Lower leg skin (tissue), 4 donors: ENCODE measurements at regions of chr1 and their contacts with region 1.

Region 1: GRCh38 chr1:152141974-152142584 is 16.9 kb downstream of the RPTN start:
- DNase-seq: peak; percentile 76 to 87
- H3K4me3 ChIP-seq: no peak overlapping the region
- CTCF ChIP-seq: peak in 1 of 3 donors; percentile 53
- POLR2A ChIP-seq: no peak

Region 2: GRCh38 chr1:150778409-150778808 is 1363.7 kb before region 1 on chr1:
- intact Hi-C with region 1: no loop called
- DNase-seq: no peak
- H3K4me3 ChIP-seq: no peak overlapping the region
- CTCF ChIP-seq: no peak
- POLR2A ChIP-seq: no peak

Region 3: DNA sequence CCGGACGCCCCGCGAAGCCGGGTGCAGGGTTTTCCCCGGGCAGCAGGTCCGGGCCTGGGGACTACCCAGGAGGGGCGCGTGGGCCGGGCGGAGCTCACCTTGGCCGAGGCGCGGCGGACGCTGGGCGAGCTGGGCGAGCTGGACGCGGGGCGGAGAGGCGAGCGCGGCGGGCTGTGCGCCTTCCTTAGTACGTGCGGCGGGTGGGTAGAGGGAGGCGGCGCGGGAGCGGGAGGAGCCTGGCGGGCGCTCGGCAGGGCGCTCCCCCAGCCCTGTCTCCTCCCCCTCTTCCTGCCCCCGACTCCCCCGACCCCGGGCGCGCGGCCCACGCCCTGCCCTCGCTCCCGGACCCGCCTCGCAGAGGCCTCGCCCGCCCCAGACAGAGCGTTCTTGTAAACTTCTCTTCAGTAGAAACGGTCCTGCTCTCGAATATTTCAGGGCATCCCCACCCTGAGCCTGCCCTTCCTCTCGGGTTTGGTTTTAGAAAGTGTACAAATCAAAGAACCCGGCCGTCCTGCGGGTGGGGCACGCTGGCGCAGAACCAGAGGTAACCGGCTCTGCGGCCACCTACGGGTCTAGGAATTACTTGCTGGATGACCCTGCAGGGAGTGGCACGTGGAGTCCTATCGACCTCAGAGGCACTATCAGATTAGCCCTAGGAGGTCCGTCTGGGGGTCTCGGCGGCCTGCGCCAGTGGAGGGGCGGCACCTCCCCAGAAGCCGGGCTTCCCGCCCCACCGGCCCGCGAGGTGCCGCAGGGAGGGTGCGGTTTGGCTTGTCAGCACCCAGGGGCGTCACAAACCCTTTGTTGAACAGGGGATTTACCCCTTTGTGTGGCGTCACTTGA is 148.2 kb before region 1 on chr1 and contains the start of gene S100A10:
- intact Hi-C with region 1: no loop called
- DNase-seq: peak; percentile 79 to 97
- H3K4me3 ChIP-seq: peak within 1 kb of the TSS; percentile 75
- CTCF ChIP-seq: no peak
- POLR2A ChIP-seq: peak in 1 of 2 donors; percentile 35
- total RNA-seq, gene S100A10: 74.8 to 153 (median 102) TPM

Region 4: DNA sequence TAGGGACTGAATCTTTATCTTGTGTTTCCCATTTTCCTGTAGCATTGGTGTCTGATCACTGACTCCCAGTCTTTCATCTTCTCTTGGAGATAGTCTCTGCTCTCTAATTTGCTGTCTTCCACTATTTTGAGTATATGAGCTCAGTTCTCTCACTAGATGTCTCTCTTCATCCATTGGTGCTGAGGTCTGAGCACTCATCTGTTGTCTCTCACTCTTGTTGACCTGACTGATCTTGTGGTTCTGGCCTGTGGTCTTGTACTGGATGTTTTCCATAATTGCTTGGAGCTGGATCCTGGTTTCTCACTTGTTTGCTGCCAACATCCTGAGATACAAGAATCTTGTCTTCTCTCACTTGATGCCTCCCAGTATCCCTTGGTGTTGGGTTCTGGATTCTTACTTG is 80.1 kb before region 1 on chr1:
- intact Hi-C with region 1: loop called (anchors 10 kb)
- DNase-seq: no peak
- H3K4me3 ChIP-seq: no peak overlapping the region
- CTCF ChIP-seq: no peak
- POLR2A ChIP-seq: no peak

Region 5: DNA sequence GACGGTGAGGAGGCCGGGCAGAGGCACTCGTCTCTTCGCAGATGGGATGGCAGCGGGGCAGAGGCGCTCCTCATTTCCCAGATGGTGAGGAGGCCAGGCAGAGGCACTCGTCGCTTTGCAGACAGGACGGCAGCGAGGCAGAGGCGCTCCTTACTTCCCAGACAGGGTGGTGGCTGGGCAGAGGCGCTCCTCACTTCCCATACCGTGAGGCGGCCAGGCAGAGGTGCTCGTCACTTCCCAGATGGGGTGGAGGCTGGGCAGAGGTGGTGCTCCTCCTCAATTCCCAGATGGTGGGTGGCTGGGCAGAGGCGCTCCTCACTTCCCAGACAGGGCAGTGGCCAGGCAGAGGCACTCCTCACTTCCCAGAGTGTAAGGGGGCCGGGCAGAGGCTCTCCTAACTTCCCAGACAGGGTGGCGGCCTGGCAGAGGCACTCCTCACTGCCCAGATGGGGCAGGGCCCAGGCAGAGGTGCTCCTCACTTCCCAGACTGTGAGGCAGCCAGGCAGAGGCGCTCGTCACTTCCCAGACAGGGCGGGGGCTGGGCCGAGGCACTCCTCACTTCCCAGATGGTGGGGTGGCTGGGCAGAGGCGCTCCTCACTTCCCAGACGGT is 63.1 kb before region 1 on chr1:
- intact Hi-C with region 1: no loop called
- DNase-seq: no peak
- H3K4me3 ChIP-seq: no peak overlapping the region
- CTCF ChIP-seq: no peak
- POLR2A ChIP-seq: no peak

Region 6: DNA sequence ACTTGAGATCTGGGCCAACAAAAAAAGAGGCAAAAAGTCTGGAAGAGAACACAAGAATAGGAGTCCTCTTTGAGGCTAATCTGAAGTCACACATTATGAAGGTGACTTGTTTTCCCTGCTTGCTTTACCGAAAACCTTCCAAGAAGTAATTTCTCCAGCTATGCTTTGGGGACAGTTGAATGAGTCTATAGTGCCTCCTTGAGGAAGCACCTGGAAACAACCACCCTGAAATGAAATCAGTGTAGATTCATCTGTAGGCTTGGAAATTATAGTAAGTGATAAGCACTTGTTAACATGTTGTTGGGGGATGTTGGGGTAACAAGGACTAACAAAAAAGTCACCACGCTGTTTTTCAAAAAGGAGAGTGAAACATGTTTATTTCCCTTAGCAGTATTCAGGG is 40.4 kb after region 1 on chr1:
- intact Hi-C with region 1: loop called (anchors 5 kb)
- DNase-seq: no peak
- H3K4me3 ChIP-seq: no peak overlapping the region
- CTCF ChIP-seq: no peak
- POLR2A ChIP-seq: no peak